ENCODE measurements at regions of chr20 and their contacts with region 1.

Region 1: GRCh38 chr20:54649511-54649962 is 174.1 kb downstream of the DOK5 start:
- DNase-seq: peak; percentile 24
- ATAC-seq: peak; percentile 28
- H3K4me3 Mint-ChIP-seq: no peak overlapping the region
- H3K27ac Mint-ChIP-seq: no peak overlapping the region
- H3K4me1 Mint-ChIP-seq: no peaks in the 10 kb centered on the region
- H3K27me3 Mint-ChIP-seq: peaks cover 7% of the 10 kb centered on the region
- CTCF ChIP-seq: peak; percentile 68

Region 2: GRCh38 chr20:53413186-53413631 is 1236.3 kb before region 1 on chr20:
- CTCF ChIA-PET with region 1: no interaction called
- POLR2A ChIA-PET with region 1: no interaction called
- intact Hi-C with region 1: loop called (anchors 5 kb)
- DNase-seq: peak; percentile 43
- ATAC-seq: peak; percentile 70
- H3K4me3 Mint-ChIP-seq: peak overlapping the region; percentile 58
- H3K27ac Mint-ChIP-seq: no peak overlapping the region
- H3K4me1 Mint-ChIP-seq: peaks cover 6% of the 10 kb centered on the region
- H3K27me3 Mint-ChIP-seq: peaks cover 2% of the 10 kb centered on the region
- CTCF ChIP-seq: no peak

Region 3: DNA sequence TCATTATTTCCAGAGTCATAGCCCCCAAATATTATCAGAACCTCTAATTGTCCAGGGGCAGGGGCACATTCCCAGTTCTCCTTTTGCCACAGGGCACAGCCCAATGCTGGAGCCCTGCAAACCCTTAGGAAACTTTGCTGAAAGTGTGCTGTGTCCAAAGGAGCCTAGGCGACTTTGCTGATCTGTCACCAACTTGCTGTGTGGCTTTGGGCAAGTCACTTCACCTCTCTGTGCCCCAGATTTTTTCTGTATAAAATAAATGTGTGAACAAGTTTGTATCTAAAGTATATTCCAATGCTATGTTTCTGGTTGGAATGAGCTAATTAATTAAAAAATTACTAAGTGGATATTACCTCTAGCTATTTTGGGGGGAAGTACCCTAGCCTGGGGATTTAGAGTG is 553.7 kb before region 1 on chr20:
- CTCF ChIA-PET with region 1: interaction called, 9 read pairs
- POLR2A ChIA-PET with region 1: no interaction called
- intact Hi-C with region 1: loop called (anchors 1 kb)
- DNase-seq: no peak
- ATAC-seq: no peak
- H3K4me3 Mint-ChIP-seq: no peak overlapping the region
- H3K27ac Mint-ChIP-seq: no peak overlapping the region
- H3K4me1 Mint-ChIP-seq: peaks cover 1% of the 10 kb centered on the region
- H3K27me3 Mint-ChIP-seq: peaks cover 2% of the 10 kb centered on the region
- CTCF ChIP-seq: no peak

Region 4: DNA sequence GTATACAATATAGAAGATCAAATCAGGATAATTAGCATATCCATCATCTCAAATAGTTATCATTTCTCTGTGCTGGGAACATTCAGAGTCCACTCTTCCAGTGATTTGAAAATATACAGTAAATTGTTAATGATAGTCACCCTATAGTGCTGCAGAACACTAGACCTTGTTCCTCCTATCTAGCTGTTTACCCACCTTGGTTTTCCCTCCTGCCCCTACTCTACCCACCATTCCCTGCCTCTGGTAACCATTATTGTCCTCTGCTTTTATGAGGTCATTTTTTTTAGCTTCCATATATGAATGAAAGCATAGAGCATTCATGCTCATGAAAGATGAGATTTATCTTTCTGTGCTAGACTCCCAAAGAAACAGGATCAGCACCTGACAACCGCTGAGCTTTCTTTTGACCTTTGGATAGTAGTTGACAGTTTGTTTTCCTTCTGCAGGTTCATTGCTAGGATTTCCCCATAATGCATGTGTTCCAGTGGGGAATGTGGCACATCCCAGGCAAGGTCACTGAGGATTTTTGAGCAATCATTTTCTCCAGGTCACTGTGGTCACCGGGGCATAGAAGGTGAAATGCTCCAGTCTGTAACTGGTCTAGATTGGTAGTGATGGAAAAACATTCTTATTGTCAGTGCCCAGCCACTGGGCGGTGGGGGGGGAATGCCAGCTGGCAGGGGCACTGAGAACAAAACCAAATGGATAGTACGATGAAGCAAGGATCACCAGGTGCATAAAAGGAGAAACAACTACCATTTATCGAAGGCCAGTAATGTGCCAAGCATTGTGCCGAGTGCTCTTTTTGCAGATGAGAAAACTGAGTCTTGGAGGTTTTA is 545.6 kb before region 1 on chr20:
- CTCF ChIA-PET with region 1: interaction called, 9 read pairs
- POLR2A ChIA-PET with region 1: no interaction called
- intact Hi-C with region 1: loop called (anchors 2 kb)
- DNase-seq: no peak
- ATAC-seq: no peak
- H3K4me3 Mint-ChIP-seq: no peak overlapping the region
- H3K27ac Mint-ChIP-seq: no peak overlapping the region
- H3K4me1 Mint-ChIP-seq: peaks cover 2% of the 10 kb centered on the region
- H3K27me3 Mint-ChIP-seq: peaks cover 10% of the 10 kb centered on the region
- CTCF ChIP-seq: no peak

Region 5: DNA sequence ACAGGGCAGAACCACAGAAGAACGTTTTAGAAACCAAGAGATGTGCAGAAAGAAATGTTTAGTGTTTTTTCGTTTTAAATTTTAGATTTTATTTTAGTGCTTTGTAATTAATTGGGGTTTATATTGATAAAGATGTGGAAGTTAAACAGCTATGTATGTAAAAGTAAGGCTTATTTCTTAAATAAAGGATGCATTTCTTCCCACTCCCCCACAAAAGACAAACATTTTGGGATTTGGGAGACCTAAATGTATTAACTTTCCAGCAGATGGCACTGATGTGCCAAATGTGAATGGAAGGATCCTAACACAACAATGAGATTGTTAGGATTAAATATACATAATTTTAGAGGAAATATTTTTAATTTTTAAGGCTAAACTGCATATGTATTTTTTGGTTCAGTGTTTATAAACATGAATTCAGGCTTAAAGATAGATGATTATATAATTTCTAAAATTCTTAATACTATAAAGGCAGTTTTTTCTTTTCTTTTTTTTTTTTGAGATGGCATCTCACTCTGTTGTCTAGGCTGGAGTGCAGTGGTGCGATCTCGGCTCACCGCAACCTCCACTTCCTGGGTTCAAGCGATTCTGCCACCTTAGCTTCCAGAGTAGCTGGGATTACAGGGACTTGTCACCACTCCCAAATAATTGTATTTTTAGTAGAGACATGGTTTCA is 429.6 kb before region 1 on chr20:
- CTCF ChIA-PET with region 1: interaction called, 5 read pairs
- POLR2A ChIA-PET with region 1: no interaction called
- intact Hi-C with region 1: loop called (anchors 1 kb)
- DNase-seq: no peak
- ATAC-seq: no peak
- H3K4me3 Mint-ChIP-seq: no peak overlapping the region
- H3K27ac Mint-ChIP-seq: no peak overlapping the region
- H3K4me1 Mint-ChIP-seq: no peaks in the 10 kb centered on the region
- H3K27me3 Mint-ChIP-seq: no peaks in the 10 kb centered on the region
- CTCF ChIP-seq: no peak

Region 6: DNA sequence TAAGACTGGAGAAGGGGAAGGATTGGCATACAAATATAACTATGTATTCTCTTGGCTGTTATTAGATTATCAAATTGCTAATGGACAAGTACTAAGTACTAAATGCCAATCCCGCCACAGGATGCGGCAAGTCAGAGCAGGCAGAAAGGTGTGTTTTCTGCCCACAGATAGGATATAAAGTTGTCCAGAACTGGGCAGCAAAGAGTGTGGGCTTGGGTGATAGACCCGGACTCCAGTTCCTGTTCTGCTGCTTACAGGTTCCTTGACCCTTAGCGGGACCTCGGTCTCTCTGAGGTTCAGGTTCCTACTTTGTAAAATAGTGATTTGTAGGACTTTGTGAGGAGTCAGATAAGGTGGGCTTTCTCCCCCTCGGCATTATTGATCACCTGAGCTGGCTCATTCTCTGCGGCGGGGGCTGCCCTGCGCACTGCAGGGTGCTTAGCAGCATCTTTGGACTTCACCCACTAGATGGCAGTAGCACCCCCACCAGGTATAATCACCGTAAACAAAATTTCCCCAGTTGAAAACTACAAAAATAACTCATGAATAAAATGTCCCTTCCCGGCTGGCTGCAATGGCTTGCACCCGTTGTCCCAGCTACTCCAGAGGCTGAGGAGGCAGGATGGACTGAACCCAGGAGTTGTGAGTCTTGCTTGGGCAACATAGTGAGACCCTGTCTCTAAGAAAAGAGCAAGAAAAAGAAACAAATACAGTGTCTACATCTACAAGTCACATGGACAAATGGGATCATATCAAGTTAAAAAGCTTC is 18.9 kb after region 1 on chr20:
- CTCF ChIA-PET with region 1: interaction called, 3 read pairs
- POLR2A ChIA-PET with region 1: no interaction called
- intact Hi-C with region 1: loop called (anchors 2 kb)
- DNase-seq: no peak
- ATAC-seq: peak; percentile 42
- H3K4me3 Mint-ChIP-seq: no peak overlapping the region
- H3K27ac Mint-ChIP-seq: no peak overlapping the region
- H3K4me1 Mint-ChIP-seq: peaks cover 6% of the 10 kb centered on the region
- H3K27me3 Mint-ChIP-seq: peaks cover 17% of the 10 kb centered on the region
- CTCF ChIP-seq: no peak

Region 7: DNA sequence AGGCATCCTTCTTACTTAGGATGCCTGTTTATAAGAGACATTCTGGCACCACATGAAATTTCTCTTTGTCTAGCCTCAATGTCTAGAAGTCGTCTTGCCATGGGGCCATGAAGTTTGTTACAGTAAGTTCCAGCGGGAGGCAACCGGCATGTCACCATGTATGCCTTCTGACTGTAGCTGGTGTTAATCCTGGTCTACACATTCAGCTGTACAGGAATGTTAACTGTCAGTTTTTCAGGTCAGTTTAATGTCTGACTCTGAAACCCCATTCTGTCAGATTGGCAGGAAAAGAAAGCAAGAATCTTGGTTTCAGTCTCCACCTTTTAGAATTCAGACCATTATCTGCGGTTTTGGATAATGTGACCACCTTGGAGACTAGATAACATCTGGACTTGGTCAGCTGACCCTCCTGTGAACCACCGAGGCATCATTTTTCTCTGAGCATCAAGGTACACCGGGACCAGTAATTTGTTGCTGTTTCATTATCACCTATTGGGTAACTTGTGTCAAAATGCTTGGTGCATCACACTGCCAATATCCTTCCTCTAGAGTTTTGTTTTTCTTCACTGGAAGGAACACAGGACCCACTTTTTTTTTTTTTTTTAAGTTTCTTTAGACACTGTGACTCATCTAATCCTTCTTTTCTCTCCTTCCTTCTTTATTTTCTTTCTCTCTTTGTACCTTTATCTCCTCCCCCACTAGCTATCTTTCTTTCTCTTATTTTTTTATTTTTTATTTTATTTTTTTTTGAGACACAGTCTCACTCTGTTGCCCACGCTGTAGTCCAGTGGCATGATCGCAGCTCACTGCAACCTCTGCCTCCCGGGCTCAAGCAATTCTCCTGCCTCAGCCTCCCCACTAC is 54.7 kb after region 1 on chr20:
- CTCF ChIA-PET with region 1: no interaction called
- POLR2A ChIA-PET with region 1: no interaction called
- intact Hi-C with region 1: no loop called
- DNase-seq: no peak
- ATAC-seq: no peak
- H3K4me3 Mint-ChIP-seq: no peak overlapping the region
- H3K27ac Mint-ChIP-seq: no peak overlapping the region
- H3K4me1 Mint-ChIP-seq: no peaks in the 10 kb centered on the region
- H3K27me3 Mint-ChIP-seq: no peaks in the 10 kb centered on the region
- CTCF ChIP-seq: no peak